ENCODE measurements at regions of chr19 and their contacts with region 1.

Region 1: GRCh38 chr19:42268704-42269477 is at the start of gene CIC:
- DNase-seq: peak; percentile 100
- ATAC-seq: peak; percentile 76
- H3K4me3 ChIP-seq: peak within 1 kb of the TSS; percentile 74 to 95 (median 90)
- H3K4me3 Mint-ChIP-seq: peak within 1 kb of the TSS; percentile 88
- H3K27ac ChIP-seq: peak within 1 kb of the TSS; percentile 98 to 100
- H3K27ac Mint-ChIP-seq: peak within 1 kb of the TSS; percentile 96
- H3K4me1 ChIP-seq: peaks cover 26 to 32% of the 10 kb centered on the region in 2 donors
- H3K4me1 Mint-ChIP-seq: peaks cover 24% of the 10 kb centered on the region
- H3K27me3 ChIP-seq: no peaks in the 10 kb centered on the region
- H3K27me3 Mint-ChIP-seq: no peaks in the 10 kb centered on the region
- CTCF ChIP-seq: no peak
- total RNA-seq, gene CIC: 119 and 123 TPM in 2 replicates

Region 2: DNA sequence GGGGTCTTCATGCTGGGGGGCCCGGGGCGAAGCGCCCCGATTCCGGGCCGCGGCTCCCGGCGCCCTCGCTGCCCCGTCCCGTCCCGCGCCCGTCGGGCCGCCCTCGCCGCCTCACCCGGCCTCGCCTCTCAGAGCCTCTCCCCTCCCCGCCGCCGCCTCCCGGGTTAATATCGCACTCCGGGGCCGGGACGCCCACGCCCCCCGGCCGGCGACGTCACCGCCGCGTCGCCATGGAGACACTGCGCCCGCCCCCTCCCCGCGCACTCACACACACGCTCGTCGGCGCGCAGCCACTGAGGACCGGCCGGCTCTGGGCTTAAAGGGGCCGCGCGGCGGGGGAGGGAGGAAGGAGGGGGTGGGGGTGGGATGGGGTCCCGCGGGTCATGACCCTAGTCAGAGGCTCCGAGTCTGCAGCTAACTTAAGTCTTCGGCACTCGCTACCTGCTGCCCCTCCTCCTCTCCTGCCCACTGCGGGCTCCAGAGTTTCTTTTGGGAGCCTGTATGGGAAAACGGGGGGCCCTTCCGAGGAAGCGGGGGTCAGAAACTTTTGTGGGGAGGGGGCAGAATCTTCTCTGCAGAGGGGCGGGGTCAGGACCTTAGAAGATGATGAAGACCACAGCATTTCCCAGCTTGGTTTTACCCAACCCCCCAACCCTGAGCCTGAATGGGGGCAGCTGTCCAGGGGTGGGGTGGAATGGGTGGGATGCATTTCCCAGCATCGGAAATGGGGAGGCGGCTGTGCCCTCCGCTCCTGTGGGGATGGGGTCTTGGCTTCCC is 13.7 kb before region 1 on chr19 and contains the start of gene ERF:
- CTCF ChIA-PET with region 1: interaction called, 4 read pairs
- POLR2A ChIA-PET with region 1: interaction called, 6 read pairs
- intact Hi-C with region 1: loop called (anchors 1 kb)
- DNase-seq: peak; percentile 97
- ATAC-seq: peak; percentile 68
- H3K4me3 ChIP-seq: peak within 1 kb of the TSS; percentile 36 to 100 (median 99)
- H3K4me3 Mint-ChIP-seq: peak within 1 kb of the TSS; percentile 85
- H3K27ac ChIP-seq: peak within 1 kb of the TSS; percentile 85 to 94
- H3K27ac Mint-ChIP-seq: peak within 1 kb of the TSS; percentile 96
- H3K4me1 ChIP-seq: peaks cover 23 to 41% of the 10 kb centered on the region in 2 donors
- H3K4me1 Mint-ChIP-seq: peaks cover 24% of the 10 kb centered on the region
- H3K27me3 ChIP-seq: peaks cover 0 to 4% (median 0%) of the 10 kb centered on the region in 4 experiments
- H3K27me3 Mint-ChIP-seq: no peaks in the 10 kb centered on the region
- CTCF ChIP-seq: no peak
- total RNA-seq, gene ERF: 48.6 and 62.1 TPM in 2 replicates

Region 3: DNA sequence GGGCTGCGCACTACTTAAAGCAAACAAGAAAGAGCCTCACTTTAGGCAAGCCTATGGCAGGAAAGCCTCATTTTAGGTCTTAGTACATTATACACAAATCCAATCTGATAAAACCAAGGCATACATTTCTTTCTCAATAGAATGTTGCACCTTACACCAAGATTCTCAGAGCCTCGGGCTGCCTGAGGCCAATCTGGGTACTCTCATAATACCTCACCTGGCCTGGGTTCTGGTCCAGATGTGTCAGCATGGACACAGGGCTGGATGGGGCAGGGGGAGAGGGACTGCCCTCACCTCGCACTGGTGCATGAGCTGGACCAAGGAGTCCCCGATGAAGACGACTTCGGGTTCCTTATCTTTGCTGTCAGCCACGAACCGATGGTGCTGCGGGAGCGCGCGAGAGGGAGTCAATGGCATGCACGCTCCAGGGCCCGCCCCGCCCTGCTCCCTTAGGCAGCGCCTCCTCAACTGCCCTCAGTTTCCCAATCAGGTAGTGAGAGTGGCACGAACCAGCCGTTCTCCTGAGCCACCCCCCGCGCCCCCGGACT is 32.8 kb after region 1 on chr19 and contains the start of gene PRR19:
- CTCF ChIA-PET with region 1: interaction called, 7 read pairs
- POLR2A ChIA-PET with region 1: interaction called, 5 read pairs
- intact Hi-C with region 1: loop called (anchors 1 kb)
- DNase-seq: no peak
- ATAC-seq: peak; percentile 3
- H3K4me3 ChIP-seq: peak within 1 kb of the TSS; percentile 42 to 80 (median 66)
- H3K4me3 Mint-ChIP-seq: peak within 1 kb of the TSS; percentile 91
- H3K27ac ChIP-seq: peak within 1 kb of the TSS in 1 of 2 donors; percentile 3
- H3K27ac Mint-ChIP-seq: peak within 1 kb of the TSS; percentile 78
- H3K4me1 ChIP-seq: peaks cover 17 to 22% of the 10 kb centered on the region in 2 donors
- H3K4me1 Mint-ChIP-seq: peaks cover 25% of the 10 kb centered on the region
- H3K27me3 ChIP-seq: no peaks in the 10 kb centered on the region
- H3K27me3 Mint-ChIP-seq: no peaks in the 10 kb centered on the region
- CTCF ChIP-seq: no peak
- total RNA-seq, gene PRR19: 0.41 and 0.54 TPM in 2 replicates

Region 4: GRCh38 chr19:42512743-42513304 is 243.9 kb after region 1 on chr19:
- CTCF ChIA-PET with region 1: no interaction called
- POLR2A ChIA-PET with region 1: no interaction called
- intact Hi-C with region 1: no loop called
- DNase-seq: no peak
- ATAC-seq: peak; percentile 54
- H3K4me3 ChIP-seq: no peak overlapping the region
- H3K4me3 Mint-ChIP-seq: peak overlapping the region; percentile 65
- H3K27ac ChIP-seq: no peak overlapping the region
- H3K27ac Mint-ChIP-seq: no peak overlapping the region
- H3K4me1 ChIP-seq: peaks cover 16 to 23% of the 10 kb centered on the region in 2 donors
- H3K4me1 Mint-ChIP-seq: peaks cover 26% of the 10 kb centered on the region
- H3K27me3 ChIP-seq: no peaks in the 10 kb centered on the region
- H3K27me3 Mint-ChIP-seq: no peaks in the 10 kb centered on the region
- CTCF ChIP-seq: no peak

Measured in B cell (primary cell).